ENCODE measurements at regions of chr20 and their contacts with region 1.

Region 1: GRCh38 chr20:54097236-54097529 is 26.8 kb upstream of the BCAS1 start:
- DNase-seq: no peak
- H3K4me3 Mint-ChIP-seq: no peak overlapping the region
- H3K27ac Mint-ChIP-seq: peak overlapping the region; percentile 5
- H3K4me1 Mint-ChIP-seq: peaks cover 3% of the 10 kb centered on the region
- H3K27me3 Mint-ChIP-seq: peaks cover 27% of the 10 kb centered on the region

Region 2: GRCh38 chr20:54140927-54141566 is 43.9 kb after region 1 on chr20:
- CTCF ChIA-PET with region 1: no interaction called
- DNase-seq: no peak
- H3K4me3 Mint-ChIP-seq: no peak overlapping the region
- H3K27ac Mint-ChIP-seq: no peak overlapping the region
- H3K4me1 Mint-ChIP-seq: no peaks in the 10 kb centered on the region
- H3K27me3 Mint-ChIP-seq: peaks cover 9% of the 10 kb centered on the region

Region 3: GRCh38 chr20:54199721-54200176 is 102.6 kb after region 1 on chr20:
- CTCF ChIA-PET with region 1: interaction called, 60 read pairs
- DNase-seq: peak; percentile 79
- H3K4me3 Mint-ChIP-seq: no peak overlapping the region
- H3K27ac Mint-ChIP-seq: no peak overlapping the region
- H3K4me1 Mint-ChIP-seq: no peaks in the 10 kb centered on the region
- H3K27me3 Mint-ChIP-seq: peaks cover 26% of the 10 kb centered on the region

Region 4: GRCh38 chr20:54207743-54208547 is 110.8 kb after region 1 on chr20 and contains the start of gene PFDN4:
- CTCF ChIA-PET with region 1: interaction called, 15 read pairs
- DNase-seq: peak; percentile 82
- H3K4me3 Mint-ChIP-seq: peak within 1 kb of the TSS; percentile 89
- H3K27ac Mint-ChIP-seq: peak within 1 kb of the TSS; percentile 97
- H3K4me1 Mint-ChIP-seq: peaks cover 25% of the 10 kb centered on the region
- H3K27me3 Mint-ChIP-seq: peaks cover 6% of the 10 kb centered on the region

Region 5: DNA sequence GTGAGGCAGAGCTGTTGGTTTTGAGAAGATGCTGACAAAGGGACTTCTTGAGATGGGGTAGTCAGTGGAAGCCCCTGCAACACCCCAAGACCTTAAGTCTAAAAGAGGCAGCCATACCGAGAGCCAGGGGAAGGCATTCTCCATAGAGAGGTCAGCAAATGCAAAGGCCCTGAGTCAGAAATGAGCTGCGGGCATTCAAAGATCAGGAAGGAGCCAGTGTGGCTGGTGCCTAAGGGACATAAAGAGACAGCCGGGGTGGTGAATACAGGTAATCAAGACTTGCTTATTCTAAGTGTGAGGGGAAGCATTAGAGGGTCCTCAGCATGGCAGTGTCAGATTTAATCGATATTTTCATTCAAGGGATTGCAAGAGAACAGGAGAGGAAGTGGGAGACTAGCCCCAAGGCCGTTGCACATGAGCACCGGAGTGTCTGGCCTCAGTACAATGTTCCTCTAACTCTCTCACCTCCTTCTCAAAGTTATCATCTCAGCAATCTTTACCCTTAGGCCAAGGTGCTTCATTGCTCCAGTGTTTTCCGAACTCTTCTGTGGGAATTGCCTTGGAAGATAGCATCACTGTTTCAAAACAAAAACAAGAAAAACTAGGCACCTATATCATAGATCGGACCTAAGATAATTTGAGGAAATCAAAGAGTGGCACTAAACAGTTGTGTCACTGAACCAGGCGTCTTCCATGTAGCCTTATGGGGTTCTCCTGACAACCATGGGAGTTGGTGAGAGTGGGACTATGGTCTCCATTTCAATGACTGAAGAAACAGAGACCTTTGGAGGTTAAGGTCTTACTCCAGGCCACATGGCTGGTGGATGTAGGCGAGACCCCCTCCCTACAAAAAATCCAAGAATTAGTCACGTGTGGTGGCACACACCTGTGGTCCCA is 551.5 kb after region 1 on chr20:
- CTCF ChIA-PET with region 1: interaction called, 15 read pairs
- DNase-seq: no peak
- H3K4me3 Mint-ChIP-seq: no peak overlapping the region
- H3K27ac Mint-ChIP-seq: no peak overlapping the region
- H3K4me1 Mint-ChIP-seq: no peaks in the 10 kb centered on the region
- H3K27me3 Mint-ChIP-seq: no peaks in the 10 kb centered on the region